Left cardiac atrium (tissue), 4 donors: ENCODE measurements at regions of chr6 and their contacts with region 1.

Region 1: GRCh38 chr6:20126789-20127653 is 85.2 kb downstream of the MBOAT1 start:
- DNase-seq: peak; percentile 75
- ATAC-seq: peak; percentile 83 to 85

Region 2: GRCh38 chr6:19569563-19569962 is 557.5 kb before region 1 on chr6:
- intact Hi-C with region 1: no loop called
- DNase-seq: no peak
- ATAC-seq: no peak

Region 3: DNA sequence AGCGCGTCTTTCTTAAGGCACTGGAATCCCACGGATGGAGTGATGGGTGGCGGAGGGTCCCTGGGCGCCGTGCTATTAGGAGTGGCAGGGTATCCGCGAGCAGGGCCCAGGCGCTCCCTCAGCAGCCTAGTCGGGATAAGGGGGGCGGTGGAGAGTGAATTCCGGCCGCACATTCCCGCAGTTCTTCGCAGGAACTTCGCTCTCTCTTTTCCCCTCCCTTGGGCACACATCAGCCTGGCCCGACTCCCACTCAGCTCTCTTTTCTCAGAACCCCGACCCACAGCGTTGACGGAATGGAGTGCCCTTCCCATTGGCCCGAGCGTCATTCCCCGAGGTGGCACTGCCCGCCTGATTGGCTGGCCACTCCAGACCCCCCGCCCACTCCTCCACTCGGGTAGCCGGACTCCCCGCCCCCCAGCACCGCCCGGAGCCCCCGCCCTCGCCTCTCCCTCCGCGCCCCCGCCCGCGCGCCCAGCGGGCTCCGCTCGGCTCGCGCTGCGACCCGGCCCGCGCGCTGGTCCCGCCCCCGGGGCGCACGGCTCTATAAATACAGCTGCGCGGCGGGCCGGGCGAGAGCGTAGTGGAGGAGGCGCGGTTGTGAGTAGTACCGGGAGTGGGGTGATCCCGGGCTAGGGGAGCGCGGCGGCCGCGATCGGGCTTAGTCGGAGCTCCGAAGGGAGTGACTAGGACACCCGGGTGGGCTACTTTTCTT is 290.1 kb before region 1 on chr6 and contains the start of gene ID4:
- intact Hi-C with region 1: no loop called
- DNase-seq: peak; percentile 95
- ATAC-seq: peak; percentile 90 to 94
- total RNA-seq, gene ID4: 9.0 to 44.0 TPM

Region 4: DNA sequence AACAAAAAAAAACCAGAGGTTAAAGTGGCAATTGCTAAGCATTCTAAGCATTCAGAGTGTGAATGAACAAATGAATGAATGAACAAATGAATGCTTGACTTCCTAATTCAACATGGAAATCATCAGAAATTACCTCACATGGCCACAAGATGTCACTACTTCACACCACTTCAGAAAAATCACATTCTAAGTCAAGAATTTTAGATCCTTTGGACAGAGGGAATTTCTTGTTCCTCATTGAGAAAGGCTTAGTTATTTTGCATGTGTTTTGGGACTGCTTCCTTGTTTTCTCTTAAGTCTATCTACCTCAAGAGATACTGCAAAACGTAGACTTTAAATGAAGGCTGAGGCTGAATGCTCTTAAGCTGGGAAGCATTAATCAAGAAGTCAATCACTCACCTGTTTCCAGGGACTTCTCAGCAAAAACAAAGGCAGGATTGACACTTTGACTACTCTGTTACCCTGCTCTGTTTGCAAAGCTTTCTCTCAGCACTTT is 34.9 kb before region 1 on chr6:
- intact Hi-C with region 1: loop called in 1 of 2 experiments (anchors 5 kb)
- DNase-seq: no peak
- ATAC-seq: no peak

Region 5: DNA sequence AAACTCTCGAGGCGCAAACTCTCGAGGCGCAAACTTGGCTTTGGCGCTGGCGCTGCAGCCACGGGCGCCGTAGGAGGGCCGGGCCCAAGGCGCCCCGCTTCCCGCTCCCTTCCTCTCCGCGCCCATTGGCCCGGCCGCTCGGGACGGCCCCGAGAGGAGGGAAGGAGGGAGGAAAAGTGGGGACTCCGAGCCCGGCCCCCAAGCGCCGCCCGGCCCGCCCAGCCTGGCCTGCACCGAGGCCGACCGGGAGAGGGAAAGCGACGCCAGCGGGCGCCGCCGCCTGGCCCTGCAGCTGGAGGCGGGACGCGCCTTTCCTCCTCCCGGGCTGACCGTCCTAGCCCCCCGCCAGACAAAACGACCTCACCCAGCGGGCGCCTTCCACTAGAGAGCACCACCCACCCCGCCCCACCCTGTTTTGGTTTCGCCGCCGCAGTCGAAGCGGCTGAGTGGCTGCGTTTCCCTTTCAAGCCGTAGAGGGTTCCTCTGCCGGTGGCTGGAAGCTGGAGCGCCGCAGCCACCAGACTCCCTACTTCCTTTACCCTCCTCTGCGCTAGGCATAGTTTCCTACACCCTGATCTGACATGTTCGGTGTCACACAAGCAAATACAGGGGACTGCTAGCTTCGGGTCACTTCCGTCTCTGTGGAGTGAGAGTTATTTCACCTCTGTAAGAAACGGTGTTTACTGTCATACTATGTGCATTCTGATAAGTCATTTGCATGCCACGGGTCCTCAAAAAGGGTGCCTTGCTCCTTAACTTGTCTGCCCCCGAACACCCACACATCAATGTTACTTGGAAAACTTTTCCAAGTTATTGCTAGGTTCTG is 85.6 kb after region 1 on chr6 and contains the start of gene MBOAT1:
- intact Hi-C with region 1: loop called (anchors 5 to 10 kb)
- DNase-seq: peak; percentile 94
- ATAC-seq: peak; percentile 98 to 99
- total RNA-seq, gene MBOAT1: 5.1 to 6.1 TPM

Region 6: GRCh38 chr6:20236909-20237600 is 110.0 kb after region 1 on chr6:
- intact Hi-C with region 1: no loop called
- DNase-seq: no peak
- ATAC-seq: no peak